Activated naive CD4-positive, alpha-beta T cell treated with anti-CD3 and anti-CD28 coated beads for 36 hours (primary cell): ENCODE measurements at regions of chr13 and their contacts with region 1.

Region 1: DNA sequence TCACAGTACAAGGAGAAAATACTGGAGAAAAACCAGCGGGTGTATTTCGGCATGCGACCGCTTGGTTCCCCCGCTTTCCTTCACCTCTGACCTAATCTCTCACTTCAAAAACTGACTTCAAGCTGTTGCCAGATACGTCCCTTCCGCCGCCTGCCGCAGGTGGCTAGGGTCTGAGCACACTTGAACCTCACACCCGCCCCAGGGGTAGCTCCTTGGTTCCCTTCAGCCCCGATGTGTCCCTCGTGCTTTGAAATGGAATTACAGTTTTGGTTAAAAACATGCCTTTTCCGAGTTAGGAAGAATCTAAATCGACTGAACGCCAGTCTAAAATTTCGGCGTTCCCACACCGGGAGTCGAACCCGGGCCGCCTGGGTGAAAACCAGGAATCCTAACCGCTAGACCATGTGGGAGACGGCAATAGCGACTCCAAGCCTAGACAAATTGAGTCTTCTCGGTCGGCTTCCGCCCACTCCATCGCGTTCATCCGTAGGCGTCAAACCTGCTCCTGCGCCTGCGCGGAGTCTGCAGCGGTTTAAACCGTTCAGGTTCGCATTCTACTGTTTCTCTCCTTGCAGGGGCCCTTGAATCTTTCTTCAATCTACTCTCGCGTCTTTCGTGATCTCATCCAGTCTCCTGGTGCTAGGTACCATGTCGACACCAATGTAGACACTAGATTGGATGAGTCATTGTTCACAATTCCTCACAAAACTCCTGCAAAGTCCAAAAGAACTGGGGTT is 71.5 kb downstream of the NUFIP1 start:
- DNase-seq: peak; percentile 97
- H3K4me3 Mint-ChIP-seq: no peak overlapping the region
- H3K27ac Mint-ChIP-seq: no peak overlapping the region
- H3K4me1 Mint-ChIP-seq: peaks cover 3% of the 10 kb centered on the region
- H3K27me3 Mint-ChIP-seq: no peaks in the 10 kb centered on the region

Region 2: GRCh38 chr13:44484562-44485138 is 433.1 kb before region 1 on chr13:
- CTCF ChIA-PET with region 1: interaction called, 6 read pairs
- intact Hi-C with region 1: loop called (anchors 1 kb)
- DNase-seq: no peak
- H3K4me3 Mint-ChIP-seq: peak overlapping the region; percentile 50
- H3K27ac Mint-ChIP-seq: no peak overlapping the region
- H3K4me1 Mint-ChIP-seq: peaks cover 9% of the 10 kb centered on the region
- H3K27me3 Mint-ChIP-seq: no peaks in the 10 kb centered on the region

Region 3: DNA sequence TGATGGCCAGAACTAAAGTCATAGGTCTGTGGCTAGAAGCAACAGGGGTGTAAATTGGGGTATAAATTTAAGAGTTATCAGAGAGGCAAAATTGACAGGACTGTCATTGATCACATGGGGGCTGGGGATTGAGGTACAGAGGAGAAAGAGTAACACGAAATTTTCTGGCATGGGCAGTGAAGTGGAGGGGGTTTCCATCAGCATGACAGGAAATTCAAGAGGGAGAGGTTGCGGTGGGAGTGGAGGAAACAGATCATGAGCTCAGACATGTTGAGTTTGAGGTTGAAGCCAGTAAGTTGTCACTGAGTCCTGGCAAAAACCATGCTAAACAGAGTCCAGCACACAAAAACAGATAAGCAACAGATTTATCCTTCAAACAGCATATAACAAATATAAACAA is 149.5 kb before region 1 on chr13:
- CTCF ChIA-PET with region 1: no interaction called
- intact Hi-C with region 1: loop called (anchors 2 kb)
- DNase-seq: peak; percentile 72
- H3K4me3 Mint-ChIP-seq: no peak overlapping the region
- H3K27ac Mint-ChIP-seq: peak overlapping the region; percentile 85
- H3K4me1 Mint-ChIP-seq: peaks cover 27% of the 10 kb centered on the region
- H3K27me3 Mint-ChIP-seq: no peaks in the 10 kb centered on the region

Region 4: GRCh38 chr13:44927968-44928367 is 10.2 kb after region 1 on chr13:
- CTCF ChIA-PET with region 1: interaction called, 10 read pairs
- intact Hi-C with region 1: no loop called
- DNase-seq: no peak
- H3K4me3 Mint-ChIP-seq: no peak overlapping the region
- H3K27ac Mint-ChIP-seq: no peak overlapping the region
- H3K4me1 Mint-ChIP-seq: no peaks in the 10 kb centered on the region
- H3K27me3 Mint-ChIP-seq: peaks cover 3% of the 10 kb centered on the region

Region 5: DNA sequence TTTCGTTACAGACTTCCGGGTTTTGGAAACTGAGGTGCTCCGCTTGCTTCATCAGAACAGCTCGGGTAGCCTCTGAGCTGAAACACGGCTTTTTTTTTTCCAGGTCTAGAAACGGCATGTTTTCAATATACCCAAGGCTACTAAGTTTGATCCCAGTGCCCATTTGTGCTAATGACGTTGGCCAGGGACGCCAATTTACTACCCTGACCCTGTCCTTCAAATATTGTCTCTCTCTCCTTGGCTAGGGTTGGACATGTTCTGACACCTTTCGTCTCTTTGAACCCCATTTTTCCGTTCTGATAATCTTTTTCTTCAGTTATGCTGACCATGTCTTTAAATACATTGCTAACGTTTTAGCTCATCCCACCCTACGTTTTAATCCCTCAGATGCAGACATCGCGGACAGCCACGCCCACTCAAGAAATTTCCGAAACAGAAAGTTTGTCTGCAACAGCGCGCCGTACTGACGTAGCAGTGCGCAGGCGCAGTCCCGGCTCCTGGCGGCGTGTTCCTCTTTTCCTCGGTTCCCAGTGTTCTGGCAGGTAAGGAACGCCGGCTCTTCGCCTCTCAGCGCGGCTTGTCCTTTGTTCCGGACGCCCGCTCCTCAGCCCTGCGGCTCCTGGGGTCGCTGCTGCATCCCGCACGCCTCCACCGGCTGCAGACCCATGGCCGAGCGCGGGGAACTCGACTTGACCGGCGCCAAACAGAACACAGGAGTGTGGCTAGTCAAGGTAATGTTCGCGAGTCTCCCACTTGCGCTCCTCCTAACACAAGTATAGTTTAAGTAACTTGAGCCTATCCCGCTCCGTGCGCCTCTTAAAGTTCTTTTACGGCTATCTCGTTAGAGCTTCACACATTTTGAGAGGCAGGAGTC is 202.5 kb after region 1 on chr13 and contains the start of gene GTF2F2:
- CTCF ChIA-PET with region 1: interaction called, 3 read pairs
- intact Hi-C with region 1: loop called (anchors 1 kb)
- DNase-seq: peak; percentile 88
- H3K4me3 Mint-ChIP-seq: no peak within 1 kb of the TSS
- H3K27ac Mint-ChIP-seq: no peak within 1 kb of the TSS
- H3K4me1 Mint-ChIP-seq: peaks cover 9% of the 10 kb centered on the region
- H3K27me3 Mint-ChIP-seq: no peaks in the 10 kb centered on the region
- total RNA-seq, gene GTF2F2: 21.3 to 22.4 TPM